ENCODE measurements at regions of chr9 and their contacts with region 1.

Region 1: GRCh38 chr9:95004411-95005277 is 278.1 kb downstream of the AOPEP start:
- DNase-seq: peak; percentile 66 to 67
- ATAC-seq: peak; percentile 18 to 60 (median 29)
- H3K4me3 ChIP-seq: peak overlapping the region; percentile 68 to 91 (median 82)
- H3K27ac ChIP-seq: peak overlapping the region; percentile 96 to 100 (median 99)
- H3K4me1 ChIP-seq: peaks cover 2 to 71% (median 32%) of the 10 kb centered on the region in 9 donors
- H3K27me3 ChIP-seq: peaks cover 0 to 41% (median 0%) of the 10 kb centered on the region in 7 donors
- CTCF ChIP-seq: no peak

Region 2: DNA sequence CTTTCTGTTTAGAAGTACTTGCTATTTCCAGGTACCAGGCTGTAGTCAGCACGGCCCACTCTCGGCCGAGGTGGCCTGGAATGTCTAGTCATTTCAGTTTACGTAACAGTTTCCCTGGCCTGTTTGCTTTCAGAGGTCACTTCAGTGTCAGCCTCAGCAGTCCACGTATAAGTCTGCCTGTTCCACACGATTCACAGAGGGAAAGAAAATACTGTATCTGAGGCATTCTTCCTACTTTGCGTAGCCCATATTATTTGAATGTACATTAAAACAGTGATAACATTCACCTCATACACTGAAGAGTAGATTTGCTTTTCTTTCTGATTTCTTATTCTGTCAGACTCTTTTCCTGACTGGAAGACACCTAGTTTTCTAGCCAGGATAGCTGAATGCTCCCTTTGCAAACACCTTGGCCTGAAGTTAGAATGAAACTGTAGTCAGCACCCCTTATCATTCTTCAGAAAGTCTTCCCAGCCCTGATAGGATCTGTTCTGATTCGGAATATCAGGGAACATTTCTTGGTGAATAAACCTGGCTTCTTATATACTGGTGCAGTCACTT is 137.3 kb before region 1 on chr9:
- intact Hi-C with region 1: loop called (anchors 1 to 10 kb)
- DNase-seq: peak; percentile 59 to 78
- ATAC-seq: peak; percentile 81 to 89 (median 86)
- H3K4me3 ChIP-seq: peak overlapping the region in 4 of 10 donors; percentile 1 to 27 (median 8)
- H3K27ac ChIP-seq: peak overlapping the region; percentile 78 to 97 (median 89)
- H3K4me1 ChIP-seq: peaks cover 10 to 85% (median 74%) of the 10 kb centered on the region in 9 donors
- H3K27me3 ChIP-seq: no peaks in the 10 kb centered on the region
- CTCF ChIP-seq: no peak

Region 3: GRCh38 chr9:94922098-94922607 is 82.5 kb before region 1 on chr9:
- intact Hi-C with region 1: no loop called
- DNase-seq: no peak
- ATAC-seq: peak in 6 of 8 donors; percentile 18 to 46 (median 36)
- H3K4me3 ChIP-seq: no peak overlapping the region
- H3K27ac ChIP-seq: peak overlapping the region; percentile 41 to 94 (median 70)
- H3K4me1 ChIP-seq: peaks cover 16 to 60% (median 40%) of the 10 kb centered on the region in 9 donors
- H3K27me3 ChIP-seq: no peaks in the 10 kb centered on the region
- CTCF ChIP-seq: no peak

Region 4: DNA sequence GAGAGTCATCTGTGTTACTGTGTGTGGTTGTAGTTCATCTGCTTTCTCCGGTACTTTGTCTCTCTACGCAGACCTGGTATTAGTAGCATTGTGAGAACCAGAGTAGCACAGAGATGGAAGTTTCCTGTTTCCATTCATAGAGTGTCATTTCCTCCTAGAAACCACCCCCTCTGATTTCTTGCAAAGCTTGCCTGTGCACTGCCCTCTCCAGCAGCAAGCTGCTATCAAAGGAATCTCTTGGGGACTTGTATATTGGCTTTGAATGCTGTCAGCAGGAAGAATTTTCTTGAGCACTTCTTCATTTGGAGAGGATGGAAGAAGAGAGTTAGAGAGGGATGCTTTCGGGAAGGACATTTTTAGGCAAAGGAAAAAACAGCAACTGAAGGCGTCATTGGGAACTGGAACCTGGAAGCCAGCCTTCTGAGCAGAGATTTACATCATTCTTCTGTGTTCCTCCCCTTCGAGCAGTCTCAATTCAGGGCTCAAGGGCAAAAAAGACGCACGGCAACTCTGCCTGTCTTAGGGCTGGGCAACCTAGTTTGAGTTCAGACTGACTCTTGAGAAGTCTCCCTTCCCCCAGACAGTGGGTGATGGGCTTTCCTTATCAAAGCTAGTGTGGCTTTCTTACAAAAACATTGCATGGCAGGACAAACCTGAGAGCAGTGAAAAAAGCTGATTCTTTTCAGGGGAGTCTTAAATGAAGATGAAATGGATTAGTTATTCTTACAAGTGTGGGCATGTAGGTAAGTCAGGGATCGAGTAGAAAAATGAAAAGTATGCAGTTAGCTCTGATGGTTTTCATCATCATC is 51.9 kb before region 1 on chr9:
- intact Hi-C with region 1: loop called in 4 of 10 experiments (anchors 1 to 5 kb)
- DNase-seq: peak in 1 of 2 donors; percentile 69
- ATAC-seq: peak; percentile 32 to 84 (median 70)
- H3K4me3 ChIP-seq: peak overlapping the region in 5 of 10 donors; percentile 6 to 20 (median 9)
- H3K27ac ChIP-seq: peak overlapping the region; percentile 33 to 92 (median 76)
- H3K4me1 ChIP-seq: peaks cover 7 to 59% (median 52%) of the 10 kb centered on the region in 9 donors
- H3K27me3 ChIP-seq: no peaks in the 10 kb centered on the region
- CTCF ChIP-seq: no peak

Region 5: GRCh38 chr9:95048225-95049087 is 43.8 kb after region 1 on chr9:
- intact Hi-C with region 1: loop called in 1 of 10 experiments (anchors 5 kb)
- DNase-seq: peak; percentile 61 to 78
- ATAC-seq: peak; percentile 67 to 89 (median 82)
- H3K4me3 ChIP-seq: peak overlapping the region; percentile 0 to 64 (median 53)
- H3K27ac ChIP-seq: peak overlapping the region; percentile 47 to 87 (median 79)
- H3K4me1 ChIP-seq: peaks cover 12 to 100% (median 77%) of the 10 kb centered on the region in 9 donors
- H3K27me3 ChIP-seq: peaks cover 0 to 11% (median 0%) of the 10 kb centered on the region in 7 donors
- CTCF ChIP-seq: no peak

Region 6: DNA sequence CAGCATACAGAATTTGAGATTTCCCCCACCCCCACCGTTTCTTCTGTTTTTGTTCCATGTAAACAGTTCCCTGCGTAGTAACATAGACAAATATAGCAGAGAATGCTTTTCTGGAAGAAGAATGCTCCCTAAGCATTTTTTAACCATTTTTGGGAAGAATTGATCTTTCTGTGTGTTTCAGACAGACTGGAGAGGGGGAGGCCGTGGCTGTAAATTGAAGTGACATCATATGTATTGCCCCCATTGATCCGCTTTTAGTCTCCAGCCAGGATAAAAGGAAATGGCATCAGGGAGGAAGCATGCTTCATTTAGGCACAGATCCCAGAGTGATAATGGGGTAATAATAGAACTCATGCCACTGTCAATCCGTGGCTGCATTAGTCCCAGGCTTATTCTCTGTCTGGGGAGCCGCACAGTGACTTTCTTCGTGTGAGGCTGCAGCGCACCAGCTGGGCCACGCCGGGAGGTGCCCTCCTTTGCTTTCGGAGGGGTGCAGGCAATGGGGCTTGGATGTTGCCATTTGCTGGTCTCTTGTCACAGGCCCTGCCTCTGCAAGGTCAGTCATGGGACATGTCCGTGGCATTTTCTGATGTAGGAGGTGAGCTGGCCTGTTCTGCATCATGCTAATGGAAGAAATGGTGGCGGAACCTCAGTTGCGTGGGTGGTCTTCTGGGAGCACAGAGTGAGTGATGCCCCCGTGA is 51.4 kb after region 1 on chr9:
- intact Hi-C with region 1: loop called in 1 of 10 experiments (anchors 5 kb)
- DNase-seq: peak in 1 of 2 donors; percentile 64
- ATAC-seq: peak; percentile 62 to 87 (median 72)
- H3K4me3 ChIP-seq: peak overlapping the region in 8 of 10 donors; percentile 3 to 39 (median 32)
- H3K27ac ChIP-seq: peak overlapping the region; percentile 49 to 84 (median 70)
- H3K4me1 ChIP-seq: peaks cover 23 to 100% (median 87%) of the 10 kb centered on the region in 9 donors
- H3K27me3 ChIP-seq: no peaks in the 10 kb centered on the region
- CTCF ChIP-seq: no peak

Region 7: DNA sequence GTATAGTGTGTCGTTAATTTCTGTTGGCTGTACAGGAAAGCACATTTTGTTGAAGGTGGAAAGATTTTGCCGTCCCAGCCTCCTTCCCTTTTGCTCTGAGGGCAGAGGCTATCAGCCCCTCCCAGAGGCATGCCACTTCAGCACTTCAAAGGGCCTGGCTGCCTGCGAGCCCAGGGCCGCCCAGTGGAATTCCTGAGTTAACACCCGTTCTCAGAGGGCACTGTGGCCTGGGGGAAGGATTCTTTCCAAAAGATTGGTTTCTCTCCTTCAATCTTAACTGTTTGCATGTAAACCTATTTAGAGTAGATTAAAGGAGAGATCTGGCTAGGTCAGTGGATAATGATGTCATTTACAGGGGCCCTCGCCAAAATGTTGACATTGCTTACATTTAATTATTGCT is 74.3 kb after region 1 on chr9:
- intact Hi-C with region 1: loop called in 2 of 10 experiments (anchors 5 kb)
- DNase-seq: no peak
- ATAC-seq: peak; percentile 42 to 61 (median 47)
- H3K4me3 ChIP-seq: no peak overlapping the region
- H3K27ac ChIP-seq: peak overlapping the region in 9 of 10 donors; percentile 2 to 86 (median 68)
- H3K4me1 ChIP-seq: peaks cover 36 to 100% (median 92%) of the 10 kb centered on the region in 9 donors
- H3K27me3 ChIP-seq: no peaks in the 10 kb centered on the region
- CTCF ChIP-seq: no peak